ENCODE measurements at regions of chr1 and their contacts with region 1.

Region 1: DNA sequence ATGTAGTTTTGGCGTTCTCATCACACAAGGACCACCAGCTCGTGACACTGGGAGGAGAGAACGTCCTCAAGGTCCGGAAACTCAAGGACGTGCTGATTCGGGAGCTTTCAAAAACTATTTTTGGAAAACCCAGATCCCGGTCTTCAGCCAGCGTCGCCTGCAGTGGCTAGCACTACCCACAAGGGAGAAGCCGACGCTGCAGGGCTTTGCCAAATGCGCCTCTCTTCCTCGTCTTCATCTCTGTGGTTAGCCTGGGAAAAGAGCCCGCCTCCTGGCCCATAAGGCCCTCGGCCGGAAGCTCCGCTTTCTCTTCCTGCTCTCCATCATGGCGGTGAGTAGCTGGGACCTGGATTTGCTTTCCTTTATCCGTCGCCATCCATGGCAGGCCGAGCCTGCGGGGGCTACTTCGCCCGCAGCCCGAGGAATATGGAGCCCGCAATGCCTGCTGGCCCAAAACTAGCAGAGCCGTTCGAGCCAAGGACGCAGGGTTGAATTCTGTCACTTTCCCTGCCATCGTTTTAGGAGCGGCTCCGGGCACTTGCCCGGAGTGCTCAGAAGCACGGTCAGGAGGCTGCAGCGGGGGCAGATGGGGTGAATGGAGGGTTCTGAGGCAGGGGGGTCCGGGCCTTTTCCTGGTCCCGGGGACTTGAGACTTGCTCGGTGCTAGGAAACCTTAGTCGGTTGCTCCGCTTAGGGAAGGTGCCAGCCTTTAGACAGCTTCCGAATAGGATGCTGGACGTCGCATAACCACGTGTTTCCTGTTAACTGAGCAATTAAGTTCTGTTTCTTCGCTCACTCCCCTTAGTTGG is at the start of gene RPL11:
- DNase-seq: peak; percentile 94

Region 2: DNA sequence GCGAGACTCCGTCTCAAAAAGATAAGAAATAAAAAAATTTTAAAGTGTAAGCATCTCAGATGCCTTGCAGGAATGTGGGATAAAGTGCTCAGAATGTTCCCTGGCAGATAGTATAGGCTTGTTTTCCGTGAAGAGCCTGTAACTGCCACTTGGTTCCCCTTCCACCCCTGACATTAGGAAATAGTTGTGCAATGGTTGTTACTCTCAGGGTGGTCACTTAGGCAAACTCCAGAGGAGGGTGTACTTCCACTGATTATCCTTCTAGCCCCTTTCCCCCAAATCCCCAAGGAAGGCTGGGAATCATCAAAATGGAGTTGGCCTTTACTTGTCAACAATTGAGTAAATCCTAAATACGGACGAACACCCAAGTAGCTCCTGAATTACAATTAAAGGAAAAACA is 10.3 kb after region 1 on chr1:
- CTCF ChIA-PET with region 1: no interaction called
- POLR2A ChIA-PET with region 1: interaction called, 11 read pairs
- DNase-seq: no peak

Region 3: DNA sequence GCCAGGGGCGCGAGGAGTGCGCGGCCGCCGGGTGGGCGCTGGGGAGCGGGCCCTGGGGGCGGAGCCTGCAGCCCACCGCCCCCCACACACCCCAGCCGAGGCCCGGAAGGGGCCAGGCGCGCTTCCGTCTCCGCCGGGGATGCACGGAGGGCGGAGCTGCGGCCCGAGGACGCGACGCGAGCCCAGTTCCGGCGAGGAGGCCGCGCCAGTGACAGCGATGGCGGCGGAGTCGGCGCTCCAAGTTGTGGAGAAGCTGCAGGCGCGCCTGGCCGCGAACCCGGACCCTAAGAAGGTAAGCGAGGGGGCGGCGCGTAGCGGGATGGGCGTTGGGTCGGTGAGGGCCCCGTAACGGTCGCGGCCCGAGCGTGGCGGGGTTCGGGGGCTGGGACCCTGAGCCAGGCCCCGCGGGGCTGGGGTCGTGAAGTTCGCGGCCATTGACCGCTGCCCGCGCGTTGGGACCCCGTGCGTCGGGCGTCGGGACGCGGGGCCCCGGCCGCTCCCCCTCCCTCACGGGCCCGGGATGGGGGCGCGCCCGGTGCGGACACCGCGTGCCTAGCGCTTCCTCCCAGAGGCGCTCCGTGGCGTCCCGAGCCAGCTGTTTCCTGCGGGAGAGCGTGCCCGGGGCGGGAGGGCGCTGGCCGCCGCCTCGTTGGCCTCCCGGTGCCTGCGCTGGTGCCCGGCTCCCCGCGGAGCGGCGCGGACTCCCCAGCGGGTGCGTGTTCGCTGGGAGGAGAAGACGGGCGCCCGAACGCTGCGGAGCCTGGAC is 51.8 kb after region 1 on chr1 and contains the start of gene ELOA:
- CTCF ChIA-PET with region 1: interaction called, 4 read pairs
- POLR2A ChIA-PET with region 1: interaction called, 21 read pairs
- DNase-seq: peak; percentile 80

Measured in HEK293T (cell line).